ENCODE measurements at regions of chr1 and their contacts with region 1.

Region 1: GRCh38 chr1:25819576-25820246 is at the start of gene MTFR1L:
- DNase-seq: peak; percentile 98 to 99 (median 98)
- ATAC-seq: peak; percentile 88
- H3K4me3 ChIP-seq: peak within 1 kb of the TSS; percentile 67
- H3K27ac ChIP-seq: peak within 1 kb of the TSS; percentile 91
- H3K4me1 ChIP-seq: peaks cover 37 to 58% of the 10 kb centered on the region in 2 experiments
- H3K27me3 ChIP-seq: no peaks in the 10 kb centered on the region
- CTCF ChIP-seq: no peak
- EP300 ChIP-seq: peak; percentile 45; the same call in 1 of the 2 replicates
- POLR2A ChIP-seq: peak; percentile 92
- RAD21 ChIP-seq: no peak
- polyA plus RNA-seq, gene MTFR1L: 81.2 to 98.5 TPM

Region 2: GRCh38 chr1:25837262-25837875 is 17.7 kb after region 1 on chr1:
- CTCF ChIA-PET with region 1: no interaction called
- POLR2A ChIA-PET with region 1: interaction called, 56 read pairs
- in situ Hi-C with region 1: no loop called
- intact Hi-C with region 1: no loop called
- DNase-seq: no peak
- ATAC-seq: peak; percentile 67
- H3K4me3 ChIP-seq: no peak overlapping the region
- H3K27ac ChIP-seq: no peak overlapping the region
- H3K4me1 ChIP-seq: peaks cover 9 to 10% of the 10 kb centered on the region in 2 experiments; a peak in 4 of 5 replicates
- H3K27me3 ChIP-seq: no peaks in the 10 kb centered on the region
- CTCF ChIP-seq: peak; percentile 31 to 62 (median 51); a peak in 4 of 6 replicates
- EP300 ChIP-seq: no peak
- POLR2A ChIP-seq: no peak
- RAD21 ChIP-seq: peak; percentile 31 to 66; a peak in 3 of 4 replicates

Region 3: GRCh38 chr1:25890239-25891034 is 70.7 kb after region 1 on chr1:
- CTCF ChIA-PET with region 1: no interaction called
- POLR2A ChIA-PET with region 1: interaction called, 8 read pairs
- in situ Hi-C with region 1: loop called (anchors 5 kb)
- intact Hi-C with region 1: loop called (anchors 5 kb)
- DNase-seq: peak in 1 of 4 experiments; percentile 13
- ATAC-seq: peak; percentile 6; the same call in 2 of the 3 replicates
- H3K4me3 ChIP-seq: no peak overlapping the region
- H3K27ac ChIP-seq: no peak overlapping the region
- H3K4me1 ChIP-seq: peaks cover 25 to 30% of the 10 kb centered on the region in 2 experiments
- H3K27me3 ChIP-seq: no peaks in the 10 kb centered on the region
- CTCF ChIP-seq: no peak
- EP300 ChIP-seq: peak; percentile 10; the same call in 1 of the 2 replicates
- POLR2A ChIP-seq: no peak
- RAD21 ChIP-seq: no peak